Aorta (tissue), 5 donors: ENCODE measurements at regions of chr11 and their contacts with region 1.

Region 1: DNA sequence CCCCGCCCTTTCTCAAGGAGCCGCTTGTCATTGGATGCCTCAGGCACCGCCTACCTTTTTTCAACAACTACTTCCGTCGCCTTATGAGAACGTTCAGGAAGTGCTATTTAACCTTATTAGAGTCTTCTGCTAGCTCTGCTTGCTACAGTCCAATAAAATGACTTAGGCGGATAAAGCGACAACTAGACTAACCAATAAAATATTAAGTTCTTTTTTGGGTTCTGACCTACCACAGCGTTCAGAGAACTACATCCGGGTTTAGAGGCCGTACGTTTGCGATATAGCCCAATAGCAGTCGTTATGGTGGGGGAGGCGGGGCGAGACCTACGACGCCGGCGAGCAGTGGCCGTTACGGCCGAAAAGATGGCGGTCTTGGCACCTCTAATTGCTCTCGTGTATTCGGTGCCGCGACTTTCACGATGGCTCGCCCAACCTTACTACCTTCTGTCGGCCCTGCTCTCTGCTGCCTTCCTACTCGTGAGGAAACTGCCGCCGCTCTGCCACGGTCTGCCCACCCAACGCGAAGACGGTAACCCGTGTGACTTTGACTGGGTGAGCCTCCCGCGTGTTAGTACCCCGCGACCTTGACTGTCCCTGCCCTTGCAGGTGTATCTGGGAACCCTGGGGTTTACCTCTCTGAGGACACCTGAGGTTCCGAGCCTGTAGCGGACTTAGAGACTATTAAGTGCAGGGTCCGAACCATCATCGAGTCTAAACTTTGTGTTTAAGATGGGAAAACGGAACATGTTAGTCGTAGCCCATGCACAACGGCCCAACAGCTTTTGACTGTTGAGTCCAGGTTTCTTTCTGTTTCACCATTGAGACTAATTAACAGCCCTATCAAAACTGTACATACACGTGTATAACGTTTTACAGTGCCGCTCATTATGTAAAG is at the start of gene TMX2:
- DNase-seq: peak; percentile 95
- ATAC-seq: peak; percentile 97
- H3K4me3 ChIP-seq: peak within 1 kb of the TSS; percentile 70 to 78
- H3K27ac ChIP-seq: peak within 1 kb of the TSS; percentile 14 to 76
- H3K4me1 ChIP-seq: peaks cover 1 to 7% of the 10 kb centered on the region in 2 donors
- H3K27me3 ChIP-seq: no peaks in the 10 kb centered on the region
- total RNA-seq, gene TMX2: 40.6 to 47.8 TPM

Region 2: GRCh38 chr11:57667736-57668435 is 44.6 kb before region 1 on chr11 and contains the start of gene ZDHHC5:
- intact Hi-C with region 1: loop called in 1 of 2 experiments (anchors 5 kb)
- DNase-seq: peak; percentile 100
- ATAC-seq: peak; percentile 98
- H3K4me3 ChIP-seq: peak within 1 kb of the TSS; percentile 52 to 76
- H3K27ac ChIP-seq: peak within 1 kb of the TSS; percentile 43 to 76
- H3K4me1 ChIP-seq: no peaks in the 10 kb centered on the region
- H3K27me3 ChIP-seq: no peaks in the 10 kb centered on the region
- total RNA-seq, gene ZDHHC5: 47.9 to 51.0 TPM

Region 3: DNA sequence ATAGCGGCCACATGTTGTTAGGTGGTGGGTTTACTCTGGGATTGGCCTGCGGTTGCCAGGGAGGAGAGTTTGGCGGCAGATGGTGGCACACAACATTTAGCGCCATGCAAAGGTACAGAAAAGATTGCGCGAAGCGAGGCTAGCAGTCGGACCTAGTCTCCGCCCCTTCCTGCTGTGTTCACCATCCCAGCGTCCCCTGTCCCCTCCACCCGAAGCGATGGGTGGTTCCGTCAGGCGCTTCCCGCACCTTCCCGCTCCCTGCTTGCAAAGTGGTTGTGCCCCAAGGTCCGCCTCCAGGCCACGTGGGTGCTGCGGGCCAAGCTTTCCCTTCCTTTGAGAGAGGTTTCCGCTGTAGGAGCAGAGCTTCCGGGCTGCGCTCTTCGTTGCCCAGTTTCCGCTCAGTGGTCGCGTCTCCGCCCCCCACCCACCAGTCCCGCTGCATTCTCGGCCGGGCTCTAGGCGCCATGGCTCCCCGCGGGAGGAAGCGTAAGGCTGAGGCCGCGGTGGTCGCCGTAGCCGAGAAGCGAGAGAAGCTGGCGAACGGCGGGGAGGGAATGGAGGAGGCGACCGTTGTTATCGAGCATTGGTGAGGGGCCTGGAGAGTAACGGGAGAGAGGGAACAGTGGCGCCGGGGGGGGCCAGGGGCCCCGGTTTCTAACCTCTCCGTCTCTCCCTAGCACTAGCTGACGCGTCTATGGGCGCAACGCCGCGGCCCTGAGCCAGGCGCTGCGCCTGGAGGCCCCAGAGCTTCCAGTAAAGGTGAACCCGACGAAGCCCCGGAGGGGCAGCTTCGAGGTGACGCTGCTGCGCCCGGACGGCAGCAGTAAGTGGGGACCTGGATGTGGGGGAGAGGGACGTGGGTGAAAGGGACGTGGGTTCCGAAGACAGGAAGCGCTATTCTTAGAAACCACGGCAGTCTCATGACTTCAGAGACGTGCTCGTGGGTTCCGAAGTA is 28.9 kb after region 1 on chr11 and contains the start of gene SELENOH:
- intact Hi-C with region 1: loop called in 1 of 2 experiments (anchors 2 kb)
- DNase-seq: peak; percentile 98
- ATAC-seq: peak; percentile 98
- H3K4me3 ChIP-seq: peak within 1 kb of the TSS; percentile 67 to 69
- H3K27ac ChIP-seq: peak within 1 kb of the TSS; percentile 46 to 94
- H3K4me1 ChIP-seq: no peaks in the 10 kb centered on the region
- H3K27me3 ChIP-seq: no peaks in the 10 kb centered on the region
- total RNA-seq, gene SELENOH: 65.0 to 75.1 TPM

Region 4: GRCh38 chr11:57761301-57762234 is 49.1 kb after region 1 on chr11 and contains the start of gene CTNND1:
- intact Hi-C with region 1: loop called in 1 of 2 experiments (anchors 5 kb)
- DNase-seq: peak; percentile 83 to 91
- ATAC-seq: peak; percentile 97
- H3K4me3 ChIP-seq: peak within 1 kb of the TSS; percentile 93 to 99
- H3K27ac ChIP-seq: peak within 1 kb of the TSS; percentile 82 to 95
- H3K4me1 ChIP-seq: peaks cover 2 to 13% of the 10 kb centered on the region in 2 donors
- H3K27me3 ChIP-seq: no peaks in the 10 kb centered on the region
- total RNA-seq, gene CTNND1: 167 to 213 TPM

Region 5: DNA sequence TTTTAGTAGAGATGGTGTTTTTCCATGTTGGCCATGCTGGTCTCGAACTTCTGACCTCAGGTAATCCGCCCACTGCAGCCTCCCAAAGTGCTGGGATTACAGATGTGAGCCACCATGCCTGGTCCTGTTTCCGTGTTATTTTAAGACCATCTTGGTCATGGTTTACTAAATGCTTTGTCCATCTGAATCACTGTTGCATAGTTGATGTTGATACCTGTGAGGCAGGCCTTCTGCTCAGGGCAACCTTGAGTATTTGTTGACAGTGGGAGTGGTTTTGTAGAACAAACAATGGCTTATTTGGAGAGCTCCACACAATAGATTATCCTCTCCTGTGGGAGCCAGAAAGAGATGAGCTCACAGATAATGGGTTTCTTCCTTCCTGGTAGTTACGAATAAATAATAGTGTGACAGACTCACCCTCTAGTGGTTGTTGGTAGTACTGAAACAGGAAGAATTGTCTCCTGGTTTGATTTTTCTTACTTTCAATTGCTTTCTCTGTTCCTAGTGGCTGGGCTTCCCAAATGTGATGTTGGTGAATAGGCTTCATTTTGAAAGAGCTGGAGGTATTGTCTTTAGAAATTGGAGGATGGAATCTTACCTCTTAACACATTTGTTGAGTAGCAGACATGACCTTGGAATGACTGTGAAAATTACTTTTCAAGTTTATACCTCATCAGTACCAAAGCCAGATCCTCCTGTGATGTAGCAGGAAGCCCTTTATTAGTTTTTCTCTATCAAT is 88.1 kb after region 1 on chr11:
- intact Hi-C with region 1: loop called in 1 of 2 experiments (anchors 10 kb)
- DNase-seq: no peak
- ATAC-seq: peak; percentile 86
- H3K4me3 ChIP-seq: no peak overlapping the region
- H3K27ac ChIP-seq: peak overlapping the region in 1 of 2 donors; percentile 8
- H3K4me1 ChIP-seq: no peaks in the 10 kb centered on the region
- H3K27me3 ChIP-seq: no peaks in the 10 kb centered on the region